GM13976 (cell line): ENCODE measurements at regions of chr2 and their contacts with region 1.

Region 1: DNA sequence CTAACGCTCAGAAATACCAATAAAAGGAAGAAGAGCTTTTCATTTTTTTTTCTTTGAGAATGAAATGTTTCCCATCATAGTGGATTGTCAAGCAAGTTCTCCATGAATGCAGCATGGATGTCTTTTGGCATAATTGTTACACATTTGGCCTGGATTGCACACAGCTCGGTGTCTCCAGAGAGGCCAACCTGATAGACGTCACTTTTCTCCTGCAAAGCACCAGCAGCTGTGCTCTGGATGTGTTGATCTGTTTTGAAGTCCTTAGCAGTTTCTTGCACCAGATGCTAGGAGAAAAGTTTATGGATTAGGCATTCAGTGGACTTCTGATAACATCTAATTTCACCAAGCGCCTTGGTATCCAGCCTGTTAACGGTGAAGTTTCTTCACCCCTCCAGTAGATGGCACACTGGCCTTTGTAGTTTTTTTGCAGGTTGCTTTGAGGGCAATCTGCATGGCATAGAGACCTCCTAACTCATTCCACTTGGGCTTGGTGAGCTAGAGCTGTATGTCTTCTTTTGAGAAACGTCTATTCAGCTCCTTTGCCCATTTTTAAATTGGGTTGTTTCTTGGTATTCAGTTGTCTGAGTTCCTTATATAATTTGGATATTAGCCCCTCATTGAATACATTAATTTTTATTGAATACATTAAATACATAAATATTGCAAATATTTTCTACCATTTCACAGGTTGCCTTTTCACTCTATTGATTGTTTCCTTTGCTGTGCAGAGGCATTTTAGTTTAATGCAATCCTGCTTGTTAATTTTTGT is 59.7 kb downstream of the PTH2R start:
- DNase-seq: peak; percentile 30
- CTCF ChIP-seq: peak; percentile 70

Region 2: GRCh38 chr2:209208211-209208610 is 741.9 kb after region 1 on chr2:
- in situ Hi-C with region 1: loop called (anchors 25 kb)
- DNase-seq: peak; percentile 29
- CTCF ChIP-seq: peak; percentile 64